ENCODE measurements at regions of chr2 and their contacts with region 1.

Region 1: DNA sequence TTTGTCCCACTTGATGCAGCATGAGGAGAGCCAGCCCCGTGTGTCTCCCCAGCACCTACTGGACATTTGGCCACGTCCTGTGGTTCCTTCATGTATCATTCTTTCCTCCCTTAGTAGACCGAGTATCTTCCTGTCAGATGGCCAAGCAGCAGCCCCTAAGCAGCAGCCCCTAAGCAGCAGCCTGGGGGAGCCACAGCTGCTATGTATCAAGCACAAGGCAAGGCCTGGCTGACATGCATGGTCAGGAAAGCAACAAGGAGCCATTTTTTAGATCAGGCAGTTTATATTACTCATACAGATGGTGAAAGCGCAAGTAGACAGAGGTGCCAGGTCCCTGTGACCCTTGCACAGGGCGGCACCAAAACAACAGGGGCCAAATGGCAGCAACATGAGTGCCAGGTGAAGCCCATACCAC is 22.1 kb downstream of the CHCHD5 start:
- DNase-seq: peak in 4 of 5 donors; percentile 39 to 82 (median 52)
- H3K4me3 ChIP-seq: no peak overlapping the region
- H3K27ac ChIP-seq: no peak overlapping the region
- H3K4me1 ChIP-seq: no peaks in the 10 kb centered on the region
- H3K27me3 ChIP-seq: no peaks in the 10 kb centered on the region
- CTCF ChIP-seq: no peak

Region 2: DNA sequence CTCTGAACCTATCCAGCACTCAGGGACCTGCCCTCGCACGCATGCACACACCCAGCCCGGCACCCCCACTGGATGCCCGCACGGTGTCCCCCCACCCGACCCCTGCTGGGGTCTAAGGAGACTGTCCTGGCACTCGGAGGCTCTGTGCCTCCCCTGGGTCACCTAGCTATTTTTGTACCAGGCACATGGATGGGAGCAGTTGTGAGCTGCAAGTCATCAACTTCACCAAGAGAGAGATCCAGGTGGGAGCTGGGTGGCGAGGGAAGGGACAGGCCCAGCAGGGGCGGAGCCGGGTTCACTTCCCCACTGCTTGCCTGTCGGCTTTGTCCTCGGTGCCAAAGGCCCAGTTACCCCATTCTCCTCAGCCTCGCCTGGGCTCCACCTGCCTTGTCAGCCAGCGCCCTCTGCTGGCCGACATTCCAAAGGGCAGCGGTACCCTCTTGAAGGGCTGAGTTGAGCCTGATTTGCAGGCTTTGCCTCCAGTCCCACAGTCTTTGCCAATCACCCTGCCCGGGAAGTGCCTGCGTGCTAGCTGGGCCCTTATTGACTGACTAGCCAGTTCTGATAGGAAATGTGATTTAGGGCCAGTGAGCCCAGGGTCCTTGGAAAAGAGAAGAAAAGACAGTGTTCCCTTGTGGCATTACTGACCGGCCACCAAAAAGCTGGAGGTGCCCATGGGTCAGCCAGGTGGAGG is 120.1 kb after region 1 on chr2:
- intact Hi-C with region 1: loop called (anchors 10 kb)
- DNase-seq: peak; percentile 90 to 95 (median 93)
- H3K4me3 ChIP-seq: no peak overlapping the region
- H3K27ac ChIP-seq: no peak overlapping the region
- H3K4me1 ChIP-seq: peaks cover 0 to 2% (median 0%) of the 10 kb centered on the region in 3 donors
- H3K27me3 ChIP-seq: no peaks in the 10 kb centered on the region
- CTCF ChIP-seq: peak; percentile 99

Region 3: DNA sequence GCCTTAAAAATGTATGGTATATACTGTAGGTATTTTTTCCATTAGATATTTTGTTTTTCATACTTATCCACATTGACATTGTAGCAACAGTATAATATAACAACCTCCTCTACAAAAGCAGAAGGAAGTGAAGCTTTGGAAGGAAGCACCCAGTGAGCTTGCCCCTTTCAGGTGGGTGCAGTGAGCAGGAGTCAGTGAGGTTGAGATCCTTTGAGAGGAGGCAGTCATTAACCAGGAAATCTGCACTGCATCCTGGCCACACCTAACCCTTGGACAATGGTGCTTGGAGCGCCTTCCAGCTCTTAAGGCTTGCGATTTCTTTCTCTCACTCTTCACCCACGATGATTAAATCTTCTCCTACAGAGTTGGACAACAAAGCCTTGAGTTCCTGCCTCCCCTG is 318.3 kb after region 1 on chr2:
- intact Hi-C with region 1: no loop called
- DNase-seq: peak in 2 of 5 donors; percentile 40 to 50
- H3K4me3 ChIP-seq: no peak overlapping the region
- H3K27ac ChIP-seq: no peak overlapping the region
- H3K4me1 ChIP-seq: peaks cover 0 to 5% (median 0%) of the 10 kb centered on the region in 3 donors
- H3K27me3 ChIP-seq: no peaks in the 10 kb centered on the region
- CTCF ChIP-seq: no peak